ENCODE measurements at regions of chr1 and their contacts with region 1.

Region 1: GRCh38 chr1:157156058-157156541 is 17.9 kb upstream of the ETV3 start:
- DNase-seq: no peak
- H3K4me3 ChIP-seq: peak overlapping the region; percentile 25; the same call in 1 of the 2 replicates
- H3K27ac ChIP-seq: no peak overlapping the region
- H3K27me3 ChIP-seq: peaks cover 4% of the 10 kb centered on the region
- CTCF ChIP-seq: peak; percentile 91

Region 2: GRCh38 chr1:156970017-156970416 is 186.1 kb before region 1 on chr1:
- CTCF ChIA-PET with region 1: interaction called, 10 read pairs
- POLR2A ChIA-PET with region 1: no interaction called
- DNase-seq: no peak
- H3K4me3 ChIP-seq: no peak overlapping the region
- H3K27ac ChIP-seq: no peak overlapping the region
- H3K27me3 ChIP-seq: no peaks in the 10 kb centered on the region
- CTCF ChIP-seq: peak; percentile 39

Region 3: GRCh38 chr1:157090196-157090647 is 65.9 kb before region 1 on chr1:
- CTCF ChIA-PET with region 1: interaction called, 406 read pairs
- POLR2A ChIA-PET with region 1: interaction called, 9 read pairs
- DNase-seq: peak; percentile 84
- H3K4me3 ChIP-seq: 0 out of 2 replicates have a peak overlapping the region, but pooled peaks have one; percentile 13
- H3K27ac ChIP-seq: no peak overlapping the region
- H3K27me3 ChIP-seq: no peaks in the 10 kb centered on the region
- CTCF ChIP-seq: peak; percentile 95

Region 4: DNA sequence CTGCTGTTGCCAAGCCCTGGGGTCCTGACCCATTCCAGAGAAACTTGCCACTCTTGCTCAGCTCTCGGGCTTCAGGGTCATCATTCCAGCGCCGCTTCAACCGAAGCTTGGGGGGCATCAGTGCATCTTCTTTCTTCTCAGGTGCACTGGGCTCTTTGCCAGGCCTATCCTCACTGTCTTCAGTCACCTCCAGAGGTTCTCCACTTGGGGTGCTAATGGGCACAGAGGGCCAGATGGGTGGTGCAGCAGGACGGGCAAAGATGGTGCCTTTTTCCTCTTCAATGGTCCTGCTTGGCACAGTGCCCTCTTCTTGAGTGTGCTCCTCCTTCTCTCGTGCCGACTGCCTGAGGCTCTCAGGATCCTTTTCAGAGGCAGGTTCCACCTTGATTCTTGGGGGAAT is 31.2 kb before region 1 on chr1:
- CTCF ChIA-PET with region 1: interaction called, 12 read pairs
- POLR2A ChIA-PET with region 1: no interaction called
- DNase-seq: no peak
- H3K4me3 ChIP-seq: no peak overlapping the region
- H3K27ac ChIP-seq: no peak overlapping the region
- H3K27me3 ChIP-seq: no peaks in the 10 kb centered on the region
- CTCF ChIP-seq: no peak

Region 5: DNA sequence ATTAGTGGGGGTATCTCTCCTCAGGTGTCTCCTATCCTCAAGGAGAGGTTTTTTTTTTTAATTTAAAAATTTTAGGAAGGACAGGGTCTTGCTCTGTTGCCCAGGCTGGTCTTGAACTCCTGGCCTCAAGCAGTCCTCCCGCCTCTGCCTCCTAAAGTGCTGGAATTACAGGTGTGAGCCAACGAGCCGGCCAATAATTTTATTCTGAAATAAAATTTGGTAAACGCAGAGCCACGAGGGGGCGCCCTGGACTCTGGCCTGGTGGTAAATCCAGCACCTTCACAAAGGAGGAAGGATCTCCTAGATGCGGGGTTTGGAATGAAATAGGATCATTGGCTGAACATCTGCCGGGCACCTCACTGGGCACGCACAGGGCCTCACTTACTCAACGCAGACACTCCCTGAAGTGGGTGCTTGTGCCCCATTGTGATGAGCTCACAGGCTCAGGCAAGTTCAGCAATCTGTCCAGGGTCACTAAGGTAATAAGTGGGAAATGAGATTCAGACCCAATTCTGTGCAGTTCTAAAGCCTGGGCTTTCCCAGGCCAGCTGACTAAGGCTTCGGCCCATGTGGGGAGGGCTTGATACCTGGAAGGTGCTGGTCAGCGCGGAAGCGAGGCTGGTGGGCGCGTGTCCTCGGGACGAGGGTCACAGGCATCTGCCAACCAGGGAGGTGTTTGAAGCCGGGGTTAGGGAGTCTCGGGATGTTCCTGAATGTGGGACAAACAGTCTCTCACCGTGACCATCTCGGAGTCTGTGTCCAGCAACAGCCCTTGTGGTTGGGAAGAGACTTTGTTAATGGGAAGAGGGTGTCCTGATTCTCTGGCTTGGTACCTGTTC is 14.8 kb after region 1 on chr1:
- CTCF ChIA-PET with region 1: interaction called, 12 read pairs
- POLR2A ChIA-PET with region 1: no interaction called
- DNase-seq: no peak
- H3K4me3 ChIP-seq: no peak overlapping the region
- H3K27ac ChIP-seq: no peak overlapping the region
- H3K27me3 ChIP-seq: peaks cover 41% of the 10 kb centered on the region
- CTCF ChIP-seq: peak; percentile 60

Region 6: GRCh38 chr1:157466011-157466410 is 309.9 kb after region 1 on chr1:
- CTCF ChIA-PET with region 1: no interaction called
- POLR2A ChIA-PET with region 1: no interaction called
- DNase-seq: no peak
- H3K4me3 ChIP-seq: no peak overlapping the region
- H3K27ac ChIP-seq: no peak overlapping the region
- H3K27me3 ChIP-seq: no peaks in the 10 kb centered on the region
- CTCF ChIP-seq: no peak